ENCODE measurements at regions of chr11 and their contacts with region 1.

Region 1: GRCh38 chr11:93895106-93895862 is 44.9 kb upstream of the VSTM5 start:
- DNase-seq: peak in 1 of 3 donors; percentile 49
- ATAC-seq: peak; percentile 63
- H3K4me3 ChIP-seq: no peak overlapping the region
- H3K4me1 ChIP-seq: no peaks in the 10 kb centered on the region
- CTCF ChIP-seq: no peak

Region 2: GRCh38 chr11:93662177-93662575 is 233.1 kb before region 1 on chr11:
- intact Hi-C with region 1: no loop called
- DNase-seq: no peak
- ATAC-seq: no peak
- H3K4me3 ChIP-seq: peak overlapping the region; percentile 76
- H3K4me1 ChIP-seq: peaks cover 8% of the 10 kb centered on the region
- CTCF ChIP-seq: no peak

Region 3: DNA sequence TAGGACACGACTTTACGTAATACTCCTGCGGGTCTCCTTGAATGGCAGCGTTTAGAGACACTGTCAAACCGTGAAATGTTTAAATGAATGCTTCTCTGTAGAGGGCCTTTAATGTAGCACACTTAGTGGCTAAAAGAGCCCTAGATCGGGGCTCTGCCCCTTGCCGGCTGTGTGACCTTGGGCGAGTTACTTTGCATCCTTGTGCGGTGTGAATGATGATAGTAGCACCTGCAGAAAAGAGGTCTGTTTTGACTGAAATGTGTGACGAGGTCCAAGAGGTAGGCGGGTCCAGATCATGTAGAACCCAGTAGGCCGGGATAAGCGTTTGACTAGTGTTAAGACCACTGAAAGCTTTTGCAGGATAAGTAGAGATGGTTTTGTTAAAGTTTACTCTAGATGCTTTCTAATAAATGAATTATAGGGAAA is 110.3 kb before region 1 on chr11:
- intact Hi-C with region 1: no loop called
- DNase-seq: peak in 1 of 3 donors; percentile 40
- ATAC-seq: peak; percentile 14
- H3K4me3 ChIP-seq: peak overlapping the region; percentile 86
- H3K4me1 ChIP-seq: peaks cover 20% of the 10 kb centered on the region
- CTCF ChIP-seq: no peak

Region 4: GRCh38 chr11:94417386-94417987 is 522.2 kb after region 1 on chr11:
- intact Hi-C with region 1: loop called in 1 of 2 experiments (anchors 10 kb)
- DNase-seq: peak in 1 of 3 donors; percentile 17
- ATAC-seq: no peak
- H3K4me3 ChIP-seq: no peak overlapping the region
- H3K4me1 ChIP-seq: no peaks in the 10 kb centered on the region
- CTCF ChIP-seq: no peak

Region 5: DNA sequence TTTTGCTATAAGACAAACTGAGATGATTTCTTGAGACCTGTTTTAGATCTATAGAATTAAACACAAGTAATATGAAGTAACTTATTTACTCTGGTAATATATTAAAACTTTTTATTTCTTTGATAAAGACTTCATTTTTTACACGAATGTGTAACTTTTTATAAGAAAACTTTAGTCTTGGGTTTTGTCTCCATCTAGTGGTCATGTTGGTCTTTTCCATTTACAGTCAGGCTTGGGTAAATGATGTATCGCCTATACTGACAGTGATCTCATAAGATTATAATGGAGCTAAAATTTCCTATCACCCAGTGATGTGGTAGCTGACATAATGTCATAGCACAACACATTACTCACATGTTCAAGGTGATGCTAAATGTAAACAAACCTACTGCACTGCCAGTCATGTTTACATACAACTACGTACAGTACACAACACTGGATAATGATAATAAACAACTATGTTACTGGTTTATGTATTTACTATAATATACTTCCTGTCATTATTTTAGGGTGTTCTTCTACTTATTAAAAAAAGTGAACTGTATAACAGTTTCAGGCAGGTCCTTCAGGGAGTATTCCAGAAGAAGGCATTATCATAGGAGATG is 609.5 kb after region 1 on chr11:
- intact Hi-C with region 1: loop called in 1 of 2 experiments (anchors 10 kb)
- DNase-seq: peak in 1 of 3 donors; percentile 32
- ATAC-seq: peak; percentile 46
- H3K4me3 ChIP-seq: no peak overlapping the region
- H3K4me1 ChIP-seq: no peaks in the 10 kb centered on the region
- CTCF ChIP-seq: peak; percentile 35